Activated CD8-positive, alpha-beta T cell treated with anti-CD3 and anti-CD28 coated beads for 36 hours (primary cell): ENCODE measurements at regions of chr2 and their contacts with region 1.

Region 1: GRCh38 chr2:197293252-197294007 is 17.1 kb downstream of the ANKRD44 start:
- DNase-seq: peak; percentile 69
- ATAC-seq: peak; percentile 73
- H3K4me3 Mint-ChIP-seq: peak overlapping the region; percentile 81
- H3K27ac Mint-ChIP-seq: peak overlapping the region; percentile 95
- H3K4me1 Mint-ChIP-seq: peaks cover 86% of the 10 kb centered on the region
- H3K27me3 Mint-ChIP-seq: no peaks in the 10 kb centered on the region
- CTCF ChIP-seq: no peak

Region 2: GRCh38 chr2:197279997-197280746 is 13.3 kb before region 1 on chr2:
- CTCF ChIA-PET with region 1: interaction called, 6 read pairs
- POLR2A ChIA-PET with region 1: interaction called, 10 read pairs
- intact Hi-C with region 1: no loop called
- DNase-seq: no peak
- ATAC-seq: peak; percentile 66
- H3K4me3 Mint-ChIP-seq: peak overlapping the region; percentile 61
- H3K27ac Mint-ChIP-seq: peak overlapping the region; percentile 88
- H3K4me1 Mint-ChIP-seq: peaks cover 75% of the 10 kb centered on the region
- H3K27me3 Mint-ChIP-seq: no peaks in the 10 kb centered on the region
- CTCF ChIP-seq: no peak

Region 3: GRCh38 chr2:197304556-197305011 is 11.2 kb after region 1 on chr2:
- CTCF ChIA-PET with region 1: interaction called, 15 read pairs
- POLR2A ChIA-PET with region 1: interaction called, 52 read pairs
- intact Hi-C with region 1: loop called (anchors 2 kb)
- DNase-seq: peak; percentile 55
- ATAC-seq: peak; percentile 38
- H3K4me3 Mint-ChIP-seq: peak overlapping the region; percentile 96
- H3K27ac Mint-ChIP-seq: peak overlapping the region; percentile 99
- H3K4me1 Mint-ChIP-seq: peaks cover 73% of the 10 kb centered on the region
- H3K27me3 Mint-ChIP-seq: no peaks in the 10 kb centered on the region
- CTCF ChIP-seq: no peak